Naive thymus-derived CD4-positive, alpha-beta T cell (primary cell): ENCODE measurements at regions of chr13 and their contacts with region 1.

Region 1: GRCh38 chr13:39676315-39676876 is 20.9 kb downstream of the COG6 start:
- DNase-seq: peak in 7 of 9 donors; percentile 24 to 60 (median 37)
- ATAC-seq: no peak
- H3K4me3 ChIP-seq: no peak overlapping the region
- H3K4me3 Mint-ChIP-seq: no peak overlapping the region
- H3K27ac ChIP-seq: no peak overlapping the region
- H3K27ac Mint-ChIP-seq: peak overlapping the region in 1 of 9 donors; percentile 23
- H3K4me1 ChIP-seq: no peaks in the 10 kb centered on the region
- H3K4me1 Mint-ChIP-seq: peaks cover 0 to 3% (median 0%) of the 10 kb centered on the region in 7 donors
- H3K27me3 ChIP-seq: no peaks in the 10 kb centered on the region
- H3K27me3 Mint-ChIP-seq: no peaks in the 10 kb centered on the region

Region 2: GRCh38 chr13:38970380-38971051 is 705.9 kb before region 1 on chr13:
- CTCF ChIA-PET with region 1: no interaction called
- POLR2A ChIA-PET with region 1: no interaction called
- intact Hi-C with region 1: loop called in 1 of 2 experiments (anchors 2 kb)
- DNase-seq: peak in 2 of 9 donors; percentile 0 to 3
- ATAC-seq: no peak
- H3K4me3 ChIP-seq: no peak overlapping the region
- H3K4me3 Mint-ChIP-seq: no peak overlapping the region
- H3K27ac ChIP-seq: no peak overlapping the region
- H3K27ac Mint-ChIP-seq: no peak overlapping the region
- H3K4me1 ChIP-seq: no peaks in the 10 kb centered on the region
- H3K4me1 Mint-ChIP-seq: no peaks in the 10 kb centered on the region
- H3K27me3 ChIP-seq: no peaks in the 10 kb centered on the region
- H3K27me3 Mint-ChIP-seq: peaks cover 0 to 11% (median 7%) of the 10 kb centered on the region in 5 donors

Region 3: GRCh38 chr13:39051157-39051556 is 625.2 kb before region 1 on chr13:
- CTCF ChIA-PET with region 1: no interaction called
- POLR2A ChIA-PET with region 1: no interaction called
- intact Hi-C with region 1: loop called (anchors 1 to 2 kb)
- DNase-seq: peak in 5 of 9 donors; percentile 11 to 38 (median 22)
- ATAC-seq: peak; percentile 51
- H3K4me3 ChIP-seq: no peak overlapping the region
- H3K4me3 Mint-ChIP-seq: no peak overlapping the region
- H3K27ac ChIP-seq: no peak overlapping the region
- H3K27ac Mint-ChIP-seq: peak overlapping the region in 1 of 9 donors; percentile 20
- H3K4me1 ChIP-seq: no peaks in the 10 kb centered on the region
- H3K4me1 Mint-ChIP-seq: peaks cover 0 to 13% (median 7%) of the 10 kb centered on the region in 7 donors
- H3K27me3 ChIP-seq: no peaks in the 10 kb centered on the region
- H3K27me3 Mint-ChIP-seq: no peaks in the 10 kb centered on the region

Region 4: DNA sequence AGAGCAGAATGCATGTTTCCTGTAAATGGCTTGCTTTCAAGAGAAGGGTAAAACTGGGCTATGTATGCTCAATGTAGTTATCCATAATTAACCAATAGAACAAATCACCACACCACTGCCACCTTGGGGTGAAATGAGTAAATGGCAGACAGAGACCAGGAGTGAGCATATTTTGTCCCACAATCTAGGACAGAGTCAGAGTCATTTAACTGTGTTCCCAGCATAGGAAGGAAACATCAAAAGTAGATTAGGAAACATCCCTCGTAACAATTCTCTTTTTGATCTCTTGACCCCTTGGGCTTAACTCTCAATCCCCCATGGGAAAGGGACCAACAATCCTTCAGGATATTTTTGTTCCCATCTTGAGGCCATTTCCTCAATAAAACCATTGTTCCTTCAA is 413.4 kb before region 1 on chr13:
- CTCF ChIA-PET with region 1: no interaction called
- POLR2A ChIA-PET with region 1: no interaction called
- intact Hi-C with region 1: loop called in 1 of 2 experiments (anchors 10 kb)
- DNase-seq: peak in 3 of 9 donors; percentile 1 to 36 (median 11)
- ATAC-seq: peak; percentile 38
- H3K4me3 ChIP-seq: no peak overlapping the region
- H3K4me3 Mint-ChIP-seq: no peak overlapping the region
- H3K27ac ChIP-seq: no peak overlapping the region
- H3K27ac Mint-ChIP-seq: no peak overlapping the region
- H3K4me1 ChIP-seq: no peaks in the 10 kb centered on the region
- H3K4me1 Mint-ChIP-seq: peaks cover 0 to 15% (median 0%) of the 10 kb centered on the region in 7 donors
- H3K27me3 ChIP-seq: no peaks in the 10 kb centered on the region
- H3K27me3 Mint-ChIP-seq: peaks cover 0 to 17% (median 4%) of the 10 kb centered on the region in 5 donors

Region 5: GRCh38 chr13:39415008-39415802 is 261.2 kb before region 1 on chr13:
- CTCF ChIA-PET with region 1: no interaction called
- POLR2A ChIA-PET with region 1: no interaction called
- intact Hi-C with region 1: loop called in 1 of 2 experiments (anchors 2 kb)
- DNase-seq: peak in 1 of 9 donors; percentile 2
- ATAC-seq: no peak
- H3K4me3 ChIP-seq: no peak overlapping the region
- H3K4me3 Mint-ChIP-seq: no peak overlapping the region
- H3K27ac ChIP-seq: no peak overlapping the region
- H3K27ac Mint-ChIP-seq: no peak overlapping the region
- H3K4me1 ChIP-seq: no peaks in the 10 kb centered on the region
- H3K4me1 Mint-ChIP-seq: no peaks in the 10 kb centered on the region
- H3K27me3 ChIP-seq: no peaks in the 10 kb centered on the region
- H3K27me3 Mint-ChIP-seq: peaks cover 15 to 42% (median 35%) of the 10 kb centered on the region in 5 donors

Region 6: GRCh38 chr13:39552246-39552645 is 124.2 kb before region 1 on chr13:
- CTCF ChIA-PET with region 1: no interaction called
- POLR2A ChIA-PET with region 1: no interaction called
- intact Hi-C with region 1: no loop called
- DNase-seq: no peak
- ATAC-seq: no peak
- H3K4me3 ChIP-seq: no peak overlapping the region
- H3K4me3 Mint-ChIP-seq: no peak overlapping the region
- H3K27ac ChIP-seq: no peak overlapping the region
- H3K27ac Mint-ChIP-seq: no peak overlapping the region
- H3K4me1 ChIP-seq: no peaks in the 10 kb centered on the region
- H3K4me1 Mint-ChIP-seq: no peaks in the 10 kb centered on the region
- H3K27me3 ChIP-seq: no peaks in the 10 kb centered on the region
- H3K27me3 Mint-ChIP-seq: peaks cover 9 to 34% (median 23%) of the 10 kb centered on the region in 5 donors